ENCODE measurements at regions of chr14 and their contacts with region 1.

Region 1: DNA sequence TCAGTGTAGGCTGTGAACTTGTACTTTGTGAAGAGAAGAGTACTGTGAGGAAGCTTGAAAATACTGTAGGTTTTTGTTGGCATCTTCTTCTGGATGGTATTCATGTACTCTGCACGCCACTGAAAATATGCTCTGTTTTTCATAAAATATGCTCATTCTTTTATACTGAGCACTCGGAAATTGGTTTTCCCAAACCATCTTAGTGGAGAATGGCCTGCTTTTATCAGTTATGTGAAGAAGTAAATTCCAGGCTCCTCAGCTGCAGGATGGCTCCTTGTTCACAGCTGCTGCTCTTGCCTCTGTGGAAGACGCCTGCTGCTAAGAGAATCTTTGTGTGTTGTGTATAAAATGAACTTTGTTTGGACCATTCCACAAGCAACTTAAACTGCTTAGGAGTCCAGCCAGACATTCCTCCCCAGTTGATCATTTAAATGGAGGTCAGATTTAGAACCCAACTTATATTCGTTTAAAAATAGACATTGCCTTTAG is 443.5 kb upstream of the RGS6 start:
- DNase-seq: no peak
- ATAC-seq: no peak
- H3K4me3 ChIP-seq: no peak overlapping the region
- H3K27ac ChIP-seq: no peak overlapping the region
- H3K4me1 ChIP-seq: peaks cover 11% of the 10 kb centered on the region
- H3K27me3 ChIP-seq: no peaks in the 10 kb centered on the region
- CTCF ChIP-seq: no peak
- EP300 ChIP-seq: no peak
- POLR2A ChIP-seq: no peak
- RAD21 ChIP-seq: no peak

Region 2: DNA sequence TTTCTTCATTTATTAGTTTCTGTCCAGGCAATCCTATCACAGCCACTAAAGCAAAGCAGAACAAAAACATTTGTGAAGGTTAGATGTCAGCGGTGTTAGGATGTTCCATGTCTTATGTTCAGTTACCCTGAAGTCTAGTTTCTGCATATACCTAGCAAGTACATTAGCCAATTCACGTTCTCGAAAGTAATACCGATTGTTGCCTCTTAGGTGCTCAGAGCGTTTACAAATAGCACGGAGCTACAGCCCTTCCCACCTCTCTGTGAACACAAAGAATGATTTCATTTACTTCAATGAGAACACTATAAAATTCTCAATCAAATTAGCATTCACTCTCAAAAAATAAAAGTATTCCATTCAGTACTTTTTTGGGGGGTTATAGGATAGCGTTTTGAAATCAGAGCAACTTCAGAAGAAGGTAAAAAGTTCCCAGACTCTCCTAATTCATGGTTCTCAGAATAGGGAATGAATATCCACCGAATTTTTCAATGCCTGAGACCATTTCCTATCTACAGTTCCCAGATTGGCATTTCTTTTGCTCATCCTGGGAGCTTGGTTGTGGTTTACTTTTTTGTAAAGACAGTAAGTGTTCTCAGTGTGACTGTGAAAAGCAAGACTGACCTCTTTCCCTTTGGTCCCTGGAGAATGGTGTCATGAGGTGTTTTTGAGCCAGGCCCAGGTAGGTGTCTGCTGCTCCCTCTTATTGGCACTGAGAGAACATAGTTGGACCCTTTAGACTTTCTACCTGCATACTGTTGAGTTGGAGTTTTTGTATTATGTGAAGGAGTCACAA is 44.5 kb before region 1 on chr14:
- CTCF ChIA-PET with region 1: no interaction called
- POLR2A ChIA-PET with region 1: interaction called, 5 read pairs
- RAD21 ChIA-PET with region 1: interaction called, 5 read pairs
- SMC1A ChIA-PET with region 1: interaction called, 19 read pairs
- in situ Hi-C with region 1: no loop called
- intact Hi-C with region 1: no loop called
- DNase-seq: peak; percentile 40
- ATAC-seq: peak; percentile 69
- H3K4me3 ChIP-seq: no peak overlapping the region
- H3K27ac ChIP-seq: no peak overlapping the region
- H3K4me1 ChIP-seq: peaks cover under 1% of the 10 kb centered on the region; the same call in 1 of the 2 replicates
- H3K27me3 ChIP-seq: no peaks in the 10 kb centered on the region
- CTCF ChIP-seq: no peak
- EP300 ChIP-seq: peak; percentile 38 to 47; a peak in 2 of 4 replicates
- POLR2A ChIP-seq: no peak
- RAD21 ChIP-seq: no peak

Region 3: GRCh38 chr14:71478542-71478941 is 10.2 kb before region 1 on chr14:
- CTCF ChIA-PET with region 1: interaction called, 5 read pairs
- POLR2A ChIA-PET with region 1: interaction called, 13 read pairs
- RAD21 ChIA-PET with region 1: interaction called, 10 read pairs
- SMC1A ChIA-PET with region 1: interaction called, 42 read pairs
- in situ Hi-C with region 1: no loop called
- intact Hi-C with region 1: no loop called
- DNase-seq: no peak
- ATAC-seq: peak; percentile 54
- H3K4me3 ChIP-seq: 0 out of 2 replicates have a peak overlapping the region, but pooled peaks have one; percentile 10
- H3K27ac ChIP-seq: peak overlapping the region; percentile 78
- H3K4me1 ChIP-seq: peaks cover 35% of the 10 kb centered on the region
- H3K27me3 ChIP-seq: no peaks in the 10 kb centered on the region
- CTCF ChIP-seq: no peak
- EP300 ChIP-seq: no peak
- POLR2A ChIP-seq: no peak
- RAD21 ChIP-seq: no peak